ENCODE measurements at regions of chr12 and their contacts with region 1.

Region 1: DNA sequence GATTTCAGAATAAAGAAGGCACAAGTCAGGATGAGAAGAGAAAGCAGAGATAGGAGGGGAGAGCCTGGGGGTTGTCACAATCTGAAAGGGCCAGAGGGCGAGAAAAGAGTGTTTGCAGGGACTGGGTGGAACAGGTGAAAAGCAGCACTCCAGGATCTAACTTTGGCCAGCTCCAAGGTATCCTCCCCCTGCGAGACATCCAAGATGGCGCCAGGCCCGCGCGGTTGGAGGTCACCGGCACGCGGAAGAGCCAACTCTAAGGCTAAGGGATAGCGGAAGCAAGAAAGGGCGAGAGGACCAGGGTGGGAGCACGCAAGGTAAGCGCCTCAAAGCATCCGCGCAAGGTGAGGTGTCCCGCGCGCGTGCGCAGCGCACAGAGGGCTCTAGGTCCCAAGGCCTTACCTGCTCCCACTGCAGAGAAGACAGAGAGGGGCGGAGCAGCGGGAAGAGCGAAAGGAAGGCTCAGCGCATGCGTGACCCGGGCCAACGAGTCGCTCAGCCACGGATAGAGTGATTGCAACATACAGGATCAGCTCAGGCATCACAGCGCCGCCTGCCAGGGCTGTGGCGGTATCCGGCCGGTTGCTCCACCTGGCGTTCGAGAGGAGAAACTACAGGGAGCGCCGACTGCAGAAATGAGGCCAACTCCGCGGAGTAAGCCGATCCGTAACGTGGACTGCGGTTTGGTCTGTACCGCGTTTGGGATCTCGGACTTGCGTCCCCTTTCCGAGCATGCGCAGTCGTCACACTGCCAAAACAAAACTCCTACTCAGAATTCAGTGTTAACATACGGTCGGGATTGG is at the start of gene ATP5MC2:
- DNase-seq: peak; percentile 99
- H3K4me3 Mint-ChIP-seq: peak within 1 kb of the TSS; percentile 100
- H3K27ac Mint-ChIP-seq: peak within 1 kb of the TSS; percentile 99
- H3K4me1 Mint-ChIP-seq: peaks cover 24% of the 10 kb centered on the region
- H3K27me3 Mint-ChIP-seq: peaks cover 32% of the 10 kb centered on the region
- total RNA-seq, gene ATP5MC2: 408 and 411 TPM in 2 replicates

Region 2: GRCh38 chr12:51705450-51705849 is 1970.4 kb before region 1 on chr12:
- intact Hi-C with region 1: no loop called
- DNase-seq: no peak
- H3K4me3 Mint-ChIP-seq: no peak overlapping the region
- H3K27ac Mint-ChIP-seq: no peak overlapping the region
- H3K4me1 Mint-ChIP-seq: no peaks in the 10 kb centered on the region
- H3K27me3 Mint-ChIP-seq: peaks cover 7% of the 10 kb centered on the region

Region 3: DNA sequence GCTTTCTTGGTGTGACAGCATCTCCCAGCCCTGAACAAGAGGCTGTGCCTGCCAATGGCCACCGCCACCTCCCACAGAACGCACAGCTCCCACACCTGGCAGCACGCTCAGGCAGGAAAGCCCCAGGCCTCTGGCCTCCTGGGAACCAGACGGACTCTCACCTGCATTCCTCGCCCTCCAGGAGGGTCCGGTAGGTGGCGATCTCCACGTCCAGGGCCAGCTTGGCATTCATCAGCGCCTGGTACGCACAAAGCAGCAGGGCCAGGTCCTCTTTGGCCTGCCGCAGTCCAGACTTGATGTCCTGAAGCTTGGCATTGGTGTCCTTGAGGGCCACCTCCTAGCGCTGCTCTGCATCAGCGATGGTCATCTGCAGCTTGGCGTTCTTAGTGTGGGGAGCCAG is 960.4 kb before region 1 on chr12:
- intact Hi-C with region 1: no loop called
- DNase-seq: no peak
- H3K4me3 Mint-ChIP-seq: no peak overlapping the region
- H3K27ac Mint-ChIP-seq: no peak overlapping the region
- H3K4me1 Mint-ChIP-seq: peaks cover 6% of the 10 kb centered on the region
- H3K27me3 Mint-ChIP-seq: peaks cover 53% of the 10 kb centered on the region

Region 4: GRCh38 chr12:53383096-53383657 is 292.7 kb before region 1 on chr12:
- intact Hi-C with region 1: no loop called
- DNase-seq: no peak
- H3K4me3 Mint-ChIP-seq: peak overlapping the region; percentile 65
- H3K27ac Mint-ChIP-seq: peak overlapping the region; percentile 67
- H3K4me1 Mint-ChIP-seq: peaks cover 49% of the 10 kb centered on the region
- H3K27me3 Mint-ChIP-seq: no peaks in the 10 kb centered on the region

Region 5: GRCh38 chr12:53500776-53501614 is 174.9 kb before region 1 on chr12 and contains the start of gene TARBP2:
- intact Hi-C with region 1: loop called (anchors 1 kb)
- DNase-seq: peak; percentile 98
- H3K4me3 Mint-ChIP-seq: peak within 1 kb of the TSS; percentile 93
- H3K27ac Mint-ChIP-seq: peak within 1 kb of the TSS; percentile 97
- H3K4me1 Mint-ChIP-seq: peaks cover 35% of the 10 kb centered on the region
- H3K27me3 Mint-ChIP-seq: no peaks in the 10 kb centered on the region
- total RNA-seq, gene TARBP2: 49.7 and 52.2 TPM in 2 replicates

Region 6: GRCh38 chr12:53543539-53543938 is 132.3 kb before region 1 on chr12:
- intact Hi-C with region 1: loop called (anchors 1 kb)
- DNase-seq: peak; percentile 85
- H3K4me3 Mint-ChIP-seq: no peak overlapping the region
- H3K27ac Mint-ChIP-seq: peak overlapping the region; percentile 72
- H3K4me1 Mint-ChIP-seq: peaks cover 9% of the 10 kb centered on the region
- H3K27me3 Mint-ChIP-seq: no peaks in the 10 kb centered on the region

Region 7: GRCh38 chr12:53727310-53728041 is 51.6 kb after region 1 on chr12 and contains the start of gene CALCOCO1:
- intact Hi-C with region 1: loop called (anchors 1 kb)
- DNase-seq: peak; percentile 99
- H3K4me3 Mint-ChIP-seq: peak within 1 kb of the TSS; percentile 95
- H3K27ac Mint-ChIP-seq: peak within 1 kb of the TSS; percentile 90
- H3K4me1 Mint-ChIP-seq: peaks cover 26% of the 10 kb centered on the region
- H3K27me3 Mint-ChIP-seq: peaks cover 2% of the 10 kb centered on the region
- total RNA-seq, gene CALCOCO1: 14.5 and 15.2 TPM in 2 replicates

Measured in activated CD4-positive, alpha-beta T cell treated with anti-CD3 and anti-CD28 coated beads, Interleukin-2, amount 10 ng/mL, durations not matched to agents 24 days and 14 days (primary cell).